MCF 10A (cell line): ENCODE measurements at regions of chr10 and their contacts with region 1.

Region 1: GRCh38 chr10:102917962-102918816 is at the start of gene CNNM2:
- DNase-seq: peak; percentile 100
- H3K4me3 Mint-ChIP-seq: peak within 1 kb of the TSS; percentile 89
- H3K27ac Mint-ChIP-seq: peak within 1 kb of the TSS; percentile 49
- H3K4me1 Mint-ChIP-seq: peaks cover 24% of the 10 kb centered on the region
- H3K27me3 Mint-ChIP-seq: no peaks in the 10 kb centered on the region
- CTCF ChIP-seq: no peak
- total RNA-seq, gene CNNM2: 5.6 and 7.4 TPM in 2 replicates

Region 2: DNA sequence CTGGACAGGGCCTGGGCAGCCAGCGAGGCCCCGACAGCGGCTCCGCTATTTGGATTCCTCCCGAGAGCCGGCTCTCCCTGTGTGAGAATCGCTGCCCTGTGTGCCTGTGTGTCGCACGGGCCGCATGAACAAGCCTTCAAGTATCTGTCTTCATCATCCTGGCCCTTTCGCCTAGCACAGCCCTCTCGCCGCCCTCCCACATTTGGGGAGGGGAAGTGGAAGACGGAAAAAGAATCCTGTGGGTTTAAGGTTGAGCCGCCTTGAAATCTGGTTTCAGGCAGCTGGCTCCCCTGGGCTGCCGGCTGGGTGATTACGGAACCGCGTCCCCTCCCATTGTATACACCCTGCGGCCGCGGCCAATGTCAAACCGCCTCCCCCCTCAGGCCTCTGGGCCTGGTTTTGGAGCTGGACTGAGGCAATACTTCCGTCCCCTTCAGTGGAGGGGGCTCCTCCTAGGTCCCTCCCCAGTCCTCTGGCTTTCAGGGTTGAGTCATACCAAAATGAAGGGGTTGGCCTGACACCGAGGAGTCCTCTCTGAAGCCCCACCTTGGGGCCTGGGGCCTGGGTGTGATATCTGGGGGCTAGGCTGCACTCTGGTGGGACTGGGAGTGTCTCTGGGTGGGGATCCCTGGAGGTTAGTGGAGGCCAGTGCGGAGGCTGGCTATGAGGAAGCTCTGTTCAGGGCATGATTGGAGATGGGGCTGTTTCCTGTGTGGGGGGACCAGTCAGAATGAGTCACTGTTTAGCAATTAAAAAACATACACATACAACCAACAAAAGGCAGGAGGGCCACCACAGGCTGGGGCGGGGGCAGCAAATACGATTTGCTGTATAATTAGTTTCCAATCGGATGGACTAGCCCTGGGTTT is 272.2 kb before region 1 on chr10:
- CTCF ChIA-PET with region 1: no interaction called
- POLR2A ChIA-PET with region 1: no interaction called
- intact Hi-C with region 1: no loop called
- DNase-seq: peak; percentile 96
- H3K4me3 Mint-ChIP-seq: peak overlapping the region; percentile 90
- H3K27ac Mint-ChIP-seq: peak overlapping the region; percentile 98
- H3K4me1 Mint-ChIP-seq: peaks cover 25% of the 10 kb centered on the region
- H3K27me3 Mint-ChIP-seq: no peaks in the 10 kb centered on the region
- CTCF ChIP-seq: no peak

Region 3: GRCh38 chr10:102835007-102835482 is 83.1 kb before region 1 on chr10:
- CTCF ChIA-PET with region 1: interaction called, 3 read pairs
- POLR2A ChIA-PET with region 1: no interaction called
- intact Hi-C with region 1: loop called (anchors 1 kb)
- DNase-seq: peak; percentile 82
- H3K4me3 Mint-ChIP-seq: no peak overlapping the region
- H3K27ac Mint-ChIP-seq: no peak overlapping the region
- H3K4me1 Mint-ChIP-seq: peaks cover 9% of the 10 kb centered on the region
- H3K27me3 Mint-ChIP-seq: peaks cover 12% of the 10 kb centered on the region
- CTCF ChIP-seq: peak; percentile 76

Region 4: GRCh38 chr10:102904346-102904745 is 13.8 kb before region 1 on chr10:
- CTCF ChIA-PET with region 1: interaction called, 38 read pairs
- POLR2A ChIA-PET with region 1: interaction called, 3 read pairs
- intact Hi-C with region 1: no loop called
- DNase-seq: no peak
- H3K4me3 Mint-ChIP-seq: no peak overlapping the region
- H3K27ac Mint-ChIP-seq: no peak overlapping the region
- H3K4me1 Mint-ChIP-seq: no peaks in the 10 kb centered on the region
- H3K27me3 Mint-ChIP-seq: no peaks in the 10 kb centered on the region
- CTCF ChIP-seq: no peak

Region 5: DNA sequence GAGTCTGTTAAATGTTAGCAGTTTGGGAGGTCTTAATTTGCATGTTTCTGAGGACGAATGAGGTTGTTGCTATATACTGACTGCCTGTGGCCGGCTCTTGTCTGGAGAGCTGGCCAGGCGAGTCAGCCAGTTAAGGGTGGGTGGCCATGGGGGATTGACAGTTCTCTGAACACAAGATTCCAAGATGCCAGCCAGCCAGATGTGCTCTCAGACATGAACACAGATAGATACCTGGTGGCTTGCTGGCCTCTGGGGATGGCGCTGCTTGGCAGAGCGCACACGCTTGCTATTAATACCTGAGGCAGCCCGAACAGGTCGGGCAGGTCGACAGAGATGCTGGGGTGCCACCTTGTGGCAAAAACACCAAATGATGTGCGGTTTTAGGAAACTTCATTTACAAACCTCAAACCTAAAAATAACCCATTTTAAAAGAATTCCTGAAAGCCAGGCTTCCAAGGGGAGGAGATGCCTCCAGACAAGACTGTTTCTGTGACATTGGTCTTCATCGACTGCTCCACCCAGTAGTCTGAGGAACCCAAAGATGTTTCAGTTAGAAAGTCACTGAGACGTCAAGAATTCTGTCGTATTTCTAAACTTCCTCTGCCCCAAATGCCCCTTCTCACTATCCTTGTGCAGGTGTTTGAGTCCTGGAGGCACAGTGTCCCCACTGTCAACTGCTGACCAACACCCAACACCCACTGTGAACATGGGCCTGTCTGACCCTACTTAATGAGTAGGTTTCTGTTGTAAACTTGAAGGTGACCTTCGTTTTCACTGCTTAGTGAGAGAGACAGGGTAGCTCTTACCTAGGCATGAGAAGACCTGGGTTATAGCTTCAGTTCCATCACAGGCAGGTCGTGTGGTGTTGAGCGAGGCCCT is 151.5 kb after region 1 on chr10:
- CTCF ChIA-PET with region 1: interaction called, 52 read pairs
- POLR2A ChIA-PET with region 1: interaction called, 13 read pairs
- intact Hi-C with region 1: no loop called
- DNase-seq: peak; percentile 59
- H3K4me3 Mint-ChIP-seq: no peak overlapping the region
- H3K27ac Mint-ChIP-seq: no peak overlapping the region
- H3K4me1 Mint-ChIP-seq: no peaks in the 10 kb centered on the region
- H3K27me3 Mint-ChIP-seq: no peaks in the 10 kb centered on the region
- CTCF ChIP-seq: peak; percentile 72

Region 6: DNA sequence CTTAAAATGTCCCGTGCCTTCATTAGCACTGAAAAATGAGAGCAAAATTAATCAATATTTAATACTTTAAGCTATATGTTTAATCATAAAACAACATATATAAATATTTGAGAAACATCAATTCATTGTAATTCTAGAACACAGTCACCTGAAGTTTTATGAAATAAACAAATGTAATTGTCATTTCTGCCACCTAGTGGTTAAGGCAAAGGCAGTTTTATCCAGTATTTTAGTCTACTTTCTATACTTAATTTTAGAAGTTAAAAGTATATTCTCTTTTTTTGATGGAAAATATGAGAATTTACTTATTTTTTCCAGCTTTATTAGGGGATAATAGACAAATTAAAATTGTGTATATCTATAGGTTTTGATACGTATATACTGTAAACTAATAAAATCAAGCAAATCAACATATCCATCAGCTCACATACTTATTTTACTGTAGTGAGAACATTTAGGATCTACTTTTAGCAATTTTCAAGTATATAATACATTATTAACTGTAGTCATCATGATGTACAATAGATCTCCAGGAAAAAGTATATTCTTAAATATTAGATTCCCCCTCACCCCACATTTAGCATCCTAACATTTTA is 415.8 kb after region 1 on chr10:
- CTCF ChIA-PET with region 1: interaction called, 8 read pairs
- POLR2A ChIA-PET with region 1: interaction called, 5 read pairs
- intact Hi-C with region 1: loop called (anchors 1 kb)
- DNase-seq: peak; percentile 36
- H3K4me3 Mint-ChIP-seq: no peak overlapping the region
- H3K27ac Mint-ChIP-seq: no peak overlapping the region
- H3K4me1 Mint-ChIP-seq: no peaks in the 10 kb centered on the region
- H3K27me3 Mint-ChIP-seq: no peaks in the 10 kb centered on the region
- CTCF ChIP-seq: peak; percentile 44

Region 7: GRCh38 chr10:103833731-103834365 is 915.7 kb after region 1 on chr10:
- CTCF ChIA-PET with region 1: no interaction called
- POLR2A ChIA-PET with region 1: no interaction called
- intact Hi-C with region 1: no loop called
- DNase-seq: no peak
- H3K4me3 Mint-ChIP-seq: no peak overlapping the region
- H3K27ac Mint-ChIP-seq: no peak overlapping the region
- H3K4me1 Mint-ChIP-seq: peaks cover 6% of the 10 kb centered on the region
- H3K27me3 Mint-ChIP-seq: no peaks in the 10 kb centered on the region
- CTCF ChIP-seq: no peak